ENCODE measurements at regions of chr17 and their contacts with region 1.

Region 1: DNA sequence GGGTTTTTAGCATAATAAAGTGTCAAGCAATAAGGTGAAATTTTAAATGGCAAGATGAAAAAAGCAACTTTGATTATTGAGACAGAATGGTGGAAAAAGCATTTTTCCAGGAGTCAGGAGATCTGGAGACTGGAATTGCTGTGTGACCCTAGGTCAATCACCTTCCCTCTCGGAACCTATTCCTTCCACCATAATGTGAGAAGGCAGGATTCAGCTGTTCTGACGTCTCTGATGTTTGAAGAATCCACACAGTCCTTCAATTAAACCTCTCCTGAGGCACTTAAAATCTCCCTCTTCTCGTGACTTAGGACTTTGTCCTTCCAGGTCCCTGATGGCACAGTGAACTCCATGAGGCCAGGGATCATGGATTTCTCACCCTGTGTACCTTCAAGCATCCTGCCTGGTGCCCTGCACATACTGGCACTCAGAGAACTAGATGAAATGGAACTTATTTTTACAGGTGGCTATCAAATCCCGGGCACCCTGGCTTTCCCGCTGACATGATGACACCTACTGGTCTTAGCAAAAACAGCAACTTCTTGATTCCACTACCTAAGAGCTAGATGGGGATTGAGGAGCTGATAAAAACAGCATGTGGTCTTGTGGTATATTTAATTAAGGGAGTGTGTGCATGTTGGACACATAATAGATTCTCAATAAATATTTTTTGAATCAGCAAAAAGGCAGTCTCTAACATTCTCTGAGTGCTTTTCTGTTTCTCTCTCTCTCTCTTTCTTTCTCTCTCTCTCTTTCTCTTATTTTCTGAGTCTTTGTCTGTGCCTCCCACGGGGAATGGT is 2.3 kb upstream of the CCDC182 start:
- DNase-seq: no peak
- ATAC-seq: peak; percentile 54
- H3K4me3 ChIP-seq: no peak overlapping the region
- H3K27ac ChIP-seq: no peak overlapping the region
- H3K4me1 ChIP-seq: no peaks in the 10 kb centered on the region
- H3K27me3 ChIP-seq: no peaks in the 10 kb centered on the region

Region 2: GRCh38 chr17:57130761-57131461 is 616.5 kb before region 1 on chr17:
- intact Hi-C with region 1: loop called (anchors 2 to 5 kb)
- DNase-seq: peak; percentile 85 to 91
- ATAC-seq: peak; percentile 89
- H3K4me3 ChIP-seq: no peak overlapping the region
- H3K27ac ChIP-seq: no peak overlapping the region
- H3K4me1 ChIP-seq: no peaks in the 10 kb centered on the region
- H3K27me3 ChIP-seq: no peaks in the 10 kb centered on the region

Region 3: GRCh38 chr17:57215311-57215710 is 532.1 kb before region 1 on chr17:
- intact Hi-C with region 1: no loop called
- DNase-seq: no peak
- ATAC-seq: no peak
- H3K4me3 ChIP-seq: no peak overlapping the region
- H3K27ac ChIP-seq: no peak overlapping the region
- H3K4me1 ChIP-seq: peaks cover 0 to 3% of the 10 kb centered on the region in 2 donors
- H3K27me3 ChIP-seq: no peaks in the 10 kb centered on the region

Region 4: GRCh38 chr17:57243171-57243948 is 504.1 kb before region 1 on chr17:
- intact Hi-C with region 1: loop called (anchors 5 kb)
- DNase-seq: peak; percentile 65 to 87
- ATAC-seq: peak; percentile 91
- H3K4me3 ChIP-seq: no peak overlapping the region
- H3K27ac ChIP-seq: no peak overlapping the region
- H3K4me1 ChIP-seq: peaks cover 0 to 3% of the 10 kb centered on the region in 2 donors
- H3K27me3 ChIP-seq: no peaks in the 10 kb centered on the region

Region 5: GRCh38 chr17:57902800-57903759 is 155.7 kb after region 1 on chr17:
- intact Hi-C with region 1: no loop called
- DNase-seq: peak; percentile 95 to 96
- ATAC-seq: peak; percentile 83
- H3K4me3 ChIP-seq: no peak overlapping the region
- H3K27ac ChIP-seq: peak overlapping the region in 1 of 2 donors; percentile 58
- H3K4me1 ChIP-seq: no peaks in the 10 kb centered on the region
- H3K27me3 ChIP-seq: no peaks in the 10 kb centered on the region